ENCODE measurements at regions of chr3 and their contacts with region 1.

Region 1: GRCh38 chr3:40580494-40581091 is 55.8 kb downstream of the ZNF621 start:
- DNase-seq: peak; percentile 37 to 76
- ATAC-seq: peak; percentile 63 to 80 (median 76)
- H3K4me3 ChIP-seq: no peak overlapping the region
- H3K4me3 Mint-ChIP-seq: no peak overlapping the region
- H3K27ac ChIP-seq: no peak overlapping the region
- H3K27ac Mint-ChIP-seq: no peak overlapping the region
- H3K4me1 ChIP-seq: no peaks in the 10 kb centered on the region
- H3K4me1 Mint-ChIP-seq: peaks cover 0 to 13% of the 10 kb centered on the region in 2 donors
- H3K27me3 ChIP-seq: no peaks in the 10 kb centered on the region
- H3K27me3 Mint-ChIP-seq: peaks cover 10 to 16% of the 10 kb centered on the region in 2 donors
- CTCF ChIP-seq: peak; percentile 84

Region 2: GRCh38 chr3:40329071-40329470 is 251.5 kb before region 1 on chr3:
- intact Hi-C with region 1: loop called (anchors 5 kb)
- DNase-seq: no peak
- ATAC-seq: no peak
- H3K4me3 ChIP-seq: no peak overlapping the region
- H3K4me3 Mint-ChIP-seq: no peak overlapping the region
- H3K27ac ChIP-seq: no peak overlapping the region
- H3K27ac Mint-ChIP-seq: no peak overlapping the region
- H3K4me1 ChIP-seq: no peaks in the 10 kb centered on the region
- H3K4me1 Mint-ChIP-seq: peaks cover 4 to 5% of the 10 kb centered on the region in 2 donors
- H3K27me3 ChIP-seq: no peaks in the 10 kb centered on the region
- H3K27me3 Mint-ChIP-seq: no peaks in the 10 kb centered on the region
- CTCF ChIP-seq: no peak

Region 3: DNA sequence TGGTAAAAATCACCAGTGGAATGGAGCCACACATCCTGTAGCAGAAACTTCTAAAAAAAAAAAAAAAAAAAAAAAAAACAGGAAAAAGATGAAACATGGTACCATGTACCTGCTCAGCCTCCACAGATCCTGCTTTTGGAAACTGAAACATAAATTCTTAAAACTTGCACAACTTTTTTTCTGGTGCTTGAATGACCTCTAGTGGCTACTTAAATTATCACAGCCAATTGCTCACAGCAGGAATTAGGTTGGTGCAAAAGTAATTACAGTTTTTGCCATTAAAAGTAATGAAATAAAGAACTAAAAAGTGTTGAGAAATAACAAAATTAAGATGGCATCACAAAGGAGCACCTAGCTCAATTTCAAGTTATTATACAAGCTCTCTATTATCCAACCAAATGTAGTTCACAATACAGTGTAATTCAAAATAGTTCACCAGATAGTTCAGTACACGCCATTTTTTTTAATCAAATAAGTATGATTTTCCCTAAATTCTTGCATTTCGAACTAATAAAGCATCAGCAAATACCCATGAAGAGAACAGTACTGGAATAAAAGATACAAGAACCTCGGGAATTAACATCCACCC is 1300.7 kb after region 1 on chr3:
- intact Hi-C with region 1: loop called (anchors 1 kb)
- DNase-seq: peak in 1 of 2 donors; percentile 66
- ATAC-seq: no peak
- H3K4me3 ChIP-seq: no peak overlapping the region
- H3K4me3 Mint-ChIP-seq: no peak overlapping the region
- H3K27ac ChIP-seq: no peak overlapping the region
- H3K27ac Mint-ChIP-seq: no peak overlapping the region
- H3K4me1 ChIP-seq: no peaks in the 10 kb centered on the region
- H3K4me1 Mint-ChIP-seq: no peaks in the 10 kb centered on the region
- H3K27me3 ChIP-seq: no peaks in the 10 kb centered on the region
- H3K27me3 Mint-ChIP-seq: no peaks in the 10 kb centered on the region
- CTCF ChIP-seq: peak; percentile 79

Region 4: DNA sequence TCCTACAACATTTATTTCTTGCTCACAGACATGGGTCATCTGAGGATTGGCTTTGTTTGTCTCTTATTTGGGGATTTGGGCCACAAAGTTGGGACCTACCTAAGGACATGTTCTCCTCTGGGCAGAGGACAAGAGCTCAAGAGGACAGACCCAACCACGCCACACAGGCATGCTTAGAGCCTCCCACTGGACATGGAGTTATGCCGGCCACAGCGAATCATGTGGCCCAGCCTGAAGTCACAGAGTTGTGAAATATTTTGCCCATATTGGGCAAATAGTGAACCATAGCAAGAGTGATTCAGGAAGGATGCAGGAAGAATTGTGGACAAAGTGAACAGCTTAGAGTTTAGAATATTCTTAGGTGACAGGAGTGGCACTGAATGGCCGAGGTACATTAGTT is 1520.5 kb after region 1 on chr3:
- intact Hi-C with region 1: loop called (anchors 1 kb)
- DNase-seq: no peak
- ATAC-seq: no peak
- H3K4me3 ChIP-seq: no peak overlapping the region
- H3K4me3 Mint-ChIP-seq: no peak overlapping the region
- H3K27ac ChIP-seq: no peak overlapping the region
- H3K27ac Mint-ChIP-seq: no peak overlapping the region
- H3K4me1 ChIP-seq: no peaks in the 10 kb centered on the region
- H3K4me1 Mint-ChIP-seq: peaks cover 0 to 12% of the 10 kb centered on the region in 2 donors
- H3K27me3 ChIP-seq: no peaks in the 10 kb centered on the region
- H3K27me3 Mint-ChIP-seq: no peaks in the 10 kb centered on the region
- CTCF ChIP-seq: no peak

Region 5: DNA sequence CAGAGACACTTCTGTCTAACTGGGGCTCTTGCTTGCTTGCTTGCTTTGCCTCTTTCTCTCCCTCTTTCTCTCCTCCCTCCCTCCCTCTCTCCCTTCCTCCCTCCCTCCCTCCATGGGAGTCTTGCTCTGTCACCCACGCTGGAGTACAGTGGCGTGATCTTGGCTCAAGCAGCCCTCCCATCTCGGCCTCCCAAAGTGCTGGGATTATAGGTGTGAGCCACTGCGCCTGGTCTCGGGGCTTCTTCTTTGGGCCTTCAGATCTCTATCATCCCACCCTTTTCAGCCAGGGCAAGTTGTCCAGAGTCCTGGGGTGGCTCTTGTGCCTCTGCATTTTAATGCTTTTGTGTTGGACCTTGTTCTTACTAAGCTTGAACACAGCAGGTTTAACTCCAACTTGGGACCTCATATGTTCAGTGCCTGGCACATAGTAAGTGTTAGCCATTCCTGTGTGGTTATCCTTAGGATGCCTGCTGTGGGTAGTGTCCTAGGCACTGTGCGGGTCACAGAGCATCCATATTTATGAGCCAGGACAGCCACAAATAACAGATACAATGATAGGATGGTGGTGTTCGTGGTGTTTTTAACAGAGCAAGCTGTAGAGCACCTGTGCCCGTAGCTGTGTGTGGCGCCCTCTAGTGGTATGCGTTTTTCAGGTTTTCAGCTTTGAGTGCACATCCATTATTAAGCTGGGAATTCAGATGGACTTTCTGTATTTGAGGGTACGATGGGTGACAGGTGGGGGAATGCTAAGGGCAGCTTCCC is 1610.3 kb after region 1 on chr3:
- intact Hi-C with region 1: loop called (anchors 10 kb)
- DNase-seq: peak; percentile 32 to 83
- ATAC-seq: peak; percentile 57 to 75 (median 66)
- H3K4me3 ChIP-seq: no peak overlapping the region
- H3K4me3 Mint-ChIP-seq: no peak overlapping the region
- H3K27ac ChIP-seq: no peak overlapping the region
- H3K27ac Mint-ChIP-seq: no peak overlapping the region
- H3K4me1 ChIP-seq: peaks cover 26% of the 10 kb centered on the region
- H3K4me1 Mint-ChIP-seq: peaks cover 10 to 23% of the 10 kb centered on the region in 2 donors
- H3K27me3 ChIP-seq: no peaks in the 10 kb centered on the region
- H3K27me3 Mint-ChIP-seq: no peaks in the 10 kb centered on the region
- CTCF ChIP-seq: peak; percentile 78

Measured in natural killer cell (primary cell).